Dendritic cell treated with granulocyte-macrophage colony-stimulating factor and Interleukin-4, amounts not matched to agents 40 ng/mL and 50 ng/mL, for 4 days (primary cell): ENCODE measurements at regions of chr10 and their contacts with region 1.

Region 1: DNA sequence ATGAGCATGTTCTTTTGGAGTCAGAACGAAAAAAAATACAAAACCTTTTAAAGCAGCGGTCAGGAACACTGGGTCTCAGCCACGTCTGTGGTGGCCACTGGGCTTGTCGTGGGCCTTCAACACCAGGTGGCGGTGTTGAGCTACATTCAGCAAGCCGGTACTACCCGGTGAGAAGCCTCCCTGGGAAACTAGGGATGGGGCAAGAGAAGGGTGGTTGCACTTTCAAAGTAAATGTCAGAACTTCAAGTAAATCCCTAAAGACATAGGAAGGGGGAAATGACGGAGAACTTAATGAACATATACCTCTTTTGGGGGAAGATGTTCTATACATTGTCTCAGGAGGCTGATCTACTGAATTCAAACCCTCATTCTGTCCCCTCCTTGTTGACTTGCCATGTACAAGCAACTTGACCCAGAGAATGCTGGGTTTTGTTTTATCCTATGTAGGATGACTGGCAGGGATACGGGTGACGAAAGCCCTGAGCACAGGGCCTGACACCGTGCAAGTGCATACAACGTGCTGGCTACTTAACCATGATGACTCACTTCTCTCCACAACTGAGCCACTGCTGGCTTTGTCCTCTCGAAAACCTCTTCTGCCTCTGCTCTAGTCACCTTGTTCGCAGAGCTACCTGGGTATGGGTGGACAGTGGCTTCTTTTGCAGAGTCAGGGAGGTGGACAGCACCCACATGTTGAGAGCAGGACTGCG is 49.0 kb upstream of the BAMBI start:
- H3K4me3 Mint-ChIP-seq: no peak overlapping the region
- H3K27ac Mint-ChIP-seq: no peak overlapping the region
- H3K4me1 Mint-ChIP-seq: peaks cover 6% of the 10 kb centered on the region
- H3K27me3 Mint-ChIP-seq: peaks cover 22% of the 10 kb centered on the region

Region 2: DNA sequence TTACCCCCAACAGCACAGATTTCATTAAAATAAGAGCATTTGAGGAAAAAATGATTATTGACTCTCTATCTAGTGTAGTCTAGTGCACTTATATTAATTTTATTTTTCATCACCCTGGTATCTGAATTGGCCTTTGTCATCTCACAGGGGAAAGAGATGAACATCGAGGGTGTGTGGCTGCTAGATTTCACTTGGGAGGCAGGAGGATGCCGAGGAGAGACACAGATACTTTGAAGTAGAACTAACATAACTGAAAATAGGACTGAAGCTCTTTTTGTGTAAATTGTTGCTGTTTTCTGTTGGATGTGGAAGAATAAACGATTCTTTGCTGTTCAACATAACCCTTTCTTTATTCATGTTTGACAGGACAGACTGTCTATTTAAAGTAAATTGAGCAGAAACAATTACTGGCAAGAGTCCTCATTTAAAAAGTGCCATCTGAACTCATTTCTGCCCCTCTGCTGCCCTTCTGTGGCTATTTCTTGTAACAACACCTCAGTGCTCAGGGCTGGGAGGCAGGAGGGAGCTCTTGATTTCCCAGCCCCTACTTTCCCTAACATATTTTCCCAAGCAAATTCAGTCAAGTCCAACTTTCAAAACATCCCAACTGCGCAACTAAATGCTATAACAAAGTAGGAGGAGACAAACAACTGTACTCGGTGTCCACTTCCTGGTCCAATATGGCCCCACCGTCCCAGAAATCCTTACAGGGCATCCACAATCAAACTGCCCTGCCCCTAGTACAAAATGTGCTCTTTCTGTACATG is 676.1 kb after region 1 on chr10:
- intact Hi-C with region 1: loop called (anchors 10 kb)
- H3K4me3 Mint-ChIP-seq: peak overlapping the region; percentile 37
- H3K27ac Mint-ChIP-seq: no peak overlapping the region
- H3K4me1 Mint-ChIP-seq: peaks cover 5% of the 10 kb centered on the region
- H3K27me3 Mint-ChIP-seq: peaks cover 14% of the 10 kb centered on the region